ENCODE measurements at regions of chr1 and their contacts with region 1.

Region 1: GRCh38 chr1:151510957-151511635 is at the start of gene CGN:
- DNase-seq: peak; percentile 75 to 97 (median 94)

Region 2: DNA sequence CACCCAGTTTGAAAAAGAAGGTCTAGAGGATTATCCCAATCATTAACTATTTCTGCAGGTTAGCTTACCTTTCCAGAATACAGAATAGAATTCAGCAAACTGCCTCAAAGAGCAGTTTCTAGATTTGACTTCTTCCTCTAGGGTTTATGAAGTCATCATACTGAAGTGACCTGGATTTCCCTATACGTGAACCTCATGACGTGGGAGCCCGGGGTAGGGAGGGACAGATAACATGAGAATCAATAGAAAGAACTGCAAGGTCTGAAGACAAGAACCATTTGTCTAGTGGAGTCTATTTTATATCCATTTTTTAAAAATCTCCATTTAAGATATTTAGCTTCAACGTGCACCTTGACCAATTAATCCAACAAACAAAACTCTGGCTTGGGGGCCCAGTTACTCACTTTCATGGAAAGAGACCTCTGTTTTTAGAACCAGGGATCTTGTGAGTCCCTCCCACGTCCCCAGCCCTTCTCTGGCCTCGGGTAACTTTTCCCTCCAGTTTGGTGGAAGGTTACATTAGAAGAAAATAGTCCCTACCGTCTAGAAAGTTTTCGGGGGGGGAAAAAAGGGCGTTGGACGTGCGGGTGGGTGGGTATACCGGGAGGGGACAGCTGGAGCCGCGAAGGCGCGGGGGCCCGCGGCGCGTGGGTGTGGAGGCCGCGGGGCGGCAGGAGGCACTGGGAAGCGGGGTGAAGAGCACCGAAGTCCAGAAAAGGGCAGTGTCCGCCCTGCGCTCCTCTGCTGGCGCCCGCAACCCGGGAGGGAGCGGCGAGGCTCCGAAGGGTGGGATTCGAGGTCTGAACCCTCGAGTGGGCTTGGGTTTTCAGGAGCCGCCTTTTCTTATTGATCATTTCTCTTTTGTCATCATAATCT is 38.0 kb before region 1 on chr1:
- intact Hi-C with region 1: loop called (anchors 1 kb)
- DNase-seq: peak in 33 of 42 donors; percentile 7 to 67 (median 33)

Region 3: DNA sequence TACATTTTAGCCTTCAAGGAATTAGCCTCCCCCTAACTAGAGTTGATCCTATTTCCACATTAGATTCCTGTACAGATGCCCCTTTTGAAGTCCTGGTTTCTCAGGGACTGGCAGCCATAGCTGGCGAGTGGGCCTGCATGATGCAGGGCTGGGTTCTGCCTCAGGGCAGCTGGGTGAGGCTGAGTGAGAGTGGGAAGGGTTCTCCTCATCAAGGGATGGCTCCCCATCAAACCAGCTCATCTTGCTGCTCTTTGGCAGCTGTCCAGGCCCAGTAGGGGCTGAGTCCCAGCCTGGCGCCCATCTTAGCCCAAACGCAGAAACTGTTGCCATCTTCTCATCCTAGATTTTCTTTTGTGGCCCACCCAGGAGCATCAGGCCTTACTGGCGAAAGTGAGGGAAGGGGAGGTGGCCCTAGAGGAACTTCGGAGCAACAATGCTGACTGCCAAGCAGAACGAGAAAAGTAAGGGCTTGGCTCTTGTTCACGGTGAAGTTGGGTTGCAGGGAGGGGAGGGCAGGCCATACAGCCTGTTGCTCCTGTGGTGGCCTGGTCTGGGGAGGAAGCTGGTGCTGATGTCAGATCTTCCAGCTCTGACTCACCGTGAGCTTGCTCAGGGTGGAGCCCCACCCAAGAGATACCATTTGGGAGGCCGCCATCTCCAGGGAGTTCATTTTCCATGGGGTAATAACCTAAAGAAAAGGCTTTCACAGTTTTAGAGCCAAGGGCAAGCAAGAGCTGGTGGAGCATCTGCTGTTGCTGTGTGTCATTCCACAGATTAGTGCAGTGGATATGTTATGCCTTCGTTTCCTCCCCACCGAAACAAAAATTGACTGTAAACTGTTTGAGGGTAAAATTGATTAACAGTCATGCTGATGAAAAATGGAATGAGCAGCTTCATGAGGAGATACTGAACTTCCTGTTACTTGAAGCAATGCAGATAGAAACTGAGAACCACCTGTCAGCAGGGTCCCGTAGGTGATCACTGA is 63.7 kb after region 1 on chr1:
- intact Hi-C with region 1: no loop called
- DNase-seq: no peak